Heart left ventricle (tissue), 16 donors: ENCODE measurements at regions of chr20 and their contacts with region 1.

Region 1: DNA sequence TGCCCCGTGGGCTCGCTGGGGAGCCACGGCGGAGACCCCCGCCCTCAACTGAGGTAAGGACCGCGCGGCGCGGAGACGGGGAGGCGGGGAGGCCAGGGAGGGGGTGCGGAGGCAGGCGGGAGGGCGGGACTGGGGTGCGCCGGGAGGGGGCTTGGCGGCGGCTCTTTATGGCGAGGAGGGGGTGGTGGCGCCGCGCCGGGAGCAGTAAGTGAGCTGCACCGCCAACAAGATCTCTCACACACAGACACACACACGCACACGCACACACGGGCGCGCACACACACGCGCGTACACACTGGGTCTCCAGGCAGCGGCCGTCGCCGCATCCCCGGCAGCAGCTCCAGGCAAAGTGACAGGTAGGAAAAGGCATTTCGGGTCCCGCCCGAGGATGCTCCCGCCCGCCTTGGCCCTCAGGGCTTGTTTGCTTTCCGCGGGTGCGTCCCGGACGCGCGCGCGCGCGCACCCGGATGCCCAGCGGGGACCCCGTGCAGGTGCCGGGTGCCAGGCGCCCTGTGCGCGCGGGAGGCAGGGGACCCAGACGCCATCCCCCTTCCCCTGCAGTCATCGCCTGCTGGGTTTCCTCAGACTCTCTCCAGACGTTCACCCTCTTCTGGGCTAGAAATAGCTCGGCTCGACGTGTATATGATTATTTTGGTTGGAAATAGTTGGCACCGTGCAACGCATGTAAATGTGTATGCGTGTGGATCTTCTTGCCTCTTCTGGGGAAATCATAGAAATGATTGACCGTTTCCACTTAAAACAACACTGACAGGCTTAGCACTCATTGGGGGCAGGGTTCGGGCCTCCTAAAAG is at the start of gene PLCB4:
- DNase-seq: peak; percentile 58 to 75 (median 64)
- ATAC-seq: peak in 3 of 4 donors; percentile 38 to 55 (median 41)
- H3K4me3 ChIP-seq: peak within 1 kb of the TSS; percentile 68 to 95 (median 90)
- H3K27ac ChIP-seq: peak within 1 kb of the TSS; percentile 68 to 98 (median 94)
- H3K4me1 ChIP-seq: peaks cover 0 to 50% (median 34%) of the 10 kb centered on the region in 12 donors
- H3K27me3 ChIP-seq: peaks cover 0 to 22% (median 0%) of the 10 kb centered on the region in 9 donors
- CTCF ChIP-seq: no peak
- POLR2A ChIP-seq: peak in 1 of 2 donors; percentile 38
- total RNA-seq, gene PLCB4: 14.7 to 31.8 (median 18.6) TPM

Region 2: GRCh38 chr20:8790442-8791074 is 278.5 kb before region 1 on chr20:
- intact Hi-C with region 1: loop called in 2 of 10 experiments (anchors 5 to 10 kb)
- DNase-seq: peak in 3 of 5 donors; percentile 19 to 38 (median 37)
- ATAC-seq: peak in 1 of 4 donors; percentile 50
- H3K4me3 ChIP-seq: no peak overlapping the region
- H3K27ac ChIP-seq: no peak overlapping the region
- H3K4me1 ChIP-seq: peaks cover 0 to 8% (median 0%) of the 10 kb centered on the region in 12 donors
- H3K27me3 ChIP-seq: no peaks in the 10 kb centered on the region
- CTCF ChIP-seq: peak; percentile 86 to 100 (median 94)
- POLR2A ChIP-seq: no peak

Region 3: DNA sequence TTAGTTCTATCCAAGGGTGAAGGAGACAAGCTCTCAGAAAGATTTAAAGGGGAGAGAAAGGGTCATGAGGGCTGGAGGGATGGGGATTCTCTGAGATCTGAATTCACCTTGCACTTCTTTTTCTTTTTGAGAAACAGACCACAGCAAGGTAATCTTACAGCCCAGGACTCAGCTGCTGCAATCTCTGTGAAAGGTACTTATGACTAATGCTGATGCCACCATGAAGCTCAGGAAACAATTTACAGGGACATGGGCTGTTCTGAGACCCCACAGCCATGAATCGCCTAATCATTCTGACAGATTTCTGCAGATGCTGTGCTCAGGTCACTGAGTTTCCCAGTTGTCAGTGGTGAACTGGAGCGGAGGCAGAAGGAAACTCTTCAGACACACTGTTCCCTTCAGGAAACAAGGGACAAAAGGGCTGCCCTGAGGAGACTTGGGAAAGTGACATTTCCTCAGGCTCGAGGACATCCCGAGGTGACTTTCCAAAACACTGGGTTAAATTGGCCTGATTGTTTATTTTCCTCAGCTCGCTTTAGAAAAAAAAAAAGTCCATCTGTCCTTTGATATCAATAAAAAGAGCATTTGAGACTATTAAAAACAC is 104.0 kb before region 1 on chr20:
- intact Hi-C with region 1: loop called in 3 of 10 experiments (anchors 5 to 10 kb)
- DNase-seq: peak in 2 of 5 donors; percentile 24 to 26
- ATAC-seq: peak in 3 of 4 donors; percentile 26 to 58 (median 37)
- H3K4me3 ChIP-seq: no peak overlapping the region
- H3K27ac ChIP-seq: peak overlapping the region in 4 of 12 donors; percentile 1 to 42 (median 11)
- H3K4me1 ChIP-seq: peaks cover 0 to 31% (median 12%) of the 10 kb centered on the region in 12 donors
- H3K27me3 ChIP-seq: no peaks in the 10 kb centered on the region
- CTCF ChIP-seq: no peak
- POLR2A ChIP-seq: no peak

Region 4: GRCh38 chr20:9147547-9148024 is 78.5 kb after region 1 on chr20:
- intact Hi-C with region 1: loop called in 1 of 10 experiments (anchors 10 kb)
- DNase-seq: no peak
- ATAC-seq: peak in 3 of 4 donors; percentile 41 to 66 (median 65)
- H3K4me3 ChIP-seq: no peak overlapping the region
- H3K27ac ChIP-seq: peak overlapping the region in 1 of 12 donors; percentile 21
- H3K4me1 ChIP-seq: peaks cover 0 to 59% (median 33%) of the 10 kb centered on the region in 12 donors
- H3K27me3 ChIP-seq: no peaks in the 10 kb centered on the region
- CTCF ChIP-seq: no peak
- POLR2A ChIP-seq: no peak

Region 5: GRCh38 chr20:9172851-9173250 is 103.8 kb after region 1 on chr20:
- intact Hi-C with region 1: loop called in 4 of 10 experiments (anchors 5 to 10 kb)
- DNase-seq: no peak
- ATAC-seq: peak in 3 of 4 donors; percentile 55 to 65 (median 64)
- H3K4me3 ChIP-seq: no peak overlapping the region
- H3K27ac ChIP-seq: peak overlapping the region in 1 of 12 donors; percentile 13
- H3K4me1 ChIP-seq: peaks cover 0 to 34% (median 20%) of the 10 kb centered on the region in 12 donors
- H3K27me3 ChIP-seq: no peaks in the 10 kb centered on the region
- CTCF ChIP-seq: peak in 11 of 12 donors; percentile 20 to 66 (median 44)
- POLR2A ChIP-seq: no peak

Region 6: GRCh38 chr20:9359561-9360308 is 290.7 kb after region 1 on chr20:
- intact Hi-C with region 1: loop called in 7 of 10 experiments (anchors 5 to 10 kb)
- DNase-seq: peak in 4 of 5 donors; percentile 29 to 48 (median 42)
- ATAC-seq: peak; percentile 49 to 78 (median 68)
- H3K4me3 ChIP-seq: peak overlapping the region in 1 of 12 donors; percentile 11
- H3K27ac ChIP-seq: peak overlapping the region in 5 of 12 donors; percentile 4 to 46 (median 24)
- H3K4me1 ChIP-seq: peaks cover 0 to 20% (median 11%) of the 10 kb centered on the region in 12 donors
- H3K27me3 ChIP-seq: no peaks in the 10 kb centered on the region
- CTCF ChIP-seq: peak; percentile 27 to 74 (median 60)
- POLR2A ChIP-seq: no peak